BJ (cell line): ENCODE measurements at regions of chr2 and their contacts with region 1.

Region 1: DNA sequence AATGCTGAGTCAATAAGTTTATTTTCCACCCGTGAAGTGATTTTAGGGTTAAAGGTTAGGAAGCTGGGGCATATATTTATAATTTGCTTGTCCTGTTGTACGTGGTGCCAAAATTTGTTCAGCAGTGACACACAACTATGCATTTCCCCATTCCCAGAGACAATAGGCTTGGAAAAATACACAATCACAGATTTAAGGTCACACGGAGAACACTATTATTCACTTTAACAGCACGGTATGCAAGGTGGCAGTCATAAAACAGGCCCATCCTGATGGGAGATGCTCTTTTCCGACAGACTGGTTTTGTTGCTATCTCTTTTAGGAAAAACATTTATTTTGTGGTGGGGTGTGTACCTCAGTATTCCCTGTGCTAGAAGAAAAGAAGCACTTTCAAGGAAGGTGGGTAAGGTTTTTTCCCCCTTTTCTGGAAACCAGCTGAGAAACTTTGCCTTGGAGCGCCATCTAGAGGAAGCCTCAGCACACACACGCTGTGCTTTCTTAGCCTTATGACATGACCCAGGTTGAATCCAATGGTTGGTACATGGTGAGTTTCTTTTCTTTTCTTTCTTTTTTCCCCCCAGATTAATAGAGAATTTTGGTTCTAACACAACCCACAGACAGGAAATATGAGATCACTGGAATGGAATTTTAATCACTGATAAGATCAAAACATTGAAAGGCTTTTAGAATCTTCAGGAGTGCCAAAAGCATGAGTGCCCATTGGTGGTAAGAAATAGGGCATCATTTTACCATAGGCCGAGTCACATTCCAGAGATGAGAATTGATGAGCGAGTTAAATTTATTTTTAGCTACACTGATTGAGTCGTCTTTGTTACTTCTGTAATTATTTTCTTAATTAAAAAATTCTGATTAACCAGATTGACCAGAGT is 332.1 kb downstream of the AGPS start:
- DNase-seq: no peak
- H3K4me3 ChIP-seq: no peak overlapping the region
- H3K27me3 ChIP-seq: peaks cover 3% of the 10 kb centered on the region; the same call in 1 of the 2 replicates
- CTCF ChIP-seq: peak; percentile 92

Region 2: GRCh38 chr2:177489719-177490301 is 234.8 kb before region 1 on chr2:
- CTCF ChIA-PET with region 1: interaction called, 24 read pairs
- POLR2A ChIA-PET with region 1: no interaction called
- DNase-seq: no peak
- H3K4me3 ChIP-seq: no peak overlapping the region
- H3K27me3 ChIP-seq: no peaks in the 10 kb centered on the region
- CTCF ChIP-seq: peak; percentile 63

Region 3: GRCh38 chr2:177738461-177739235 is 14.0 kb after region 1 on chr2:
- CTCF ChIA-PET with region 1: interaction called, 24 read pairs
- POLR2A ChIA-PET with region 1: no interaction called
- DNase-seq: no peak
- H3K4me3 ChIP-seq: no peak overlapping the region
- H3K27me3 ChIP-seq: no peaks in the 10 kb centered on the region
- CTCF ChIP-seq: no peak